ENCODE measurements at regions of chr6 and their contacts with region 1.

Region 1: DNA sequence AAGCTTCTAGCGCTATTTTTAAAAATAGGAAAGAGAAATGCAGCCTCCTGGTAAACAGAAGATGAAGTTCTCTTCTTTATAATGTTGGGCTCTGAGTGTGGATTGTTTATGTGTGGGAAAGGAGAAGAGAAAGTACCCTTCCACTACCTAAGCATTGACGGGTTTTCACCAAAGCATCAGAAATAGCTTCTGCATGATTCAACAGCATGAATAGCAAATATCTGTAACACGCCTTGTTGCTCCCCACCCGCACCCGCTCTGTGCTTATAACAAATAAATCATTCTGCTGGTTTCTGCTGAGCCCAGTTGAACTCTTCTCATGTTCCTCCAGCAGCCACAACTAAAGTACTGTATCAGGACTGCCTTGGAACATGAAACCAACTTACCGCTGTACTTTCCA is 20.7 kb downstream of the TXLNB start:
- DNase-seq: no peak
- H3K4me3 ChIP-seq: no peak overlapping the region
- H3K27ac ChIP-seq: no peak overlapping the region
- H3K4me1 ChIP-seq: no peaks in the 10 kb centered on the region
- H3K27me3 ChIP-seq: no peaks in the 10 kb centered on the region
- CTCF ChIP-seq: no peak
- POLR2A ChIP-seq: no peak

Region 2: DNA sequence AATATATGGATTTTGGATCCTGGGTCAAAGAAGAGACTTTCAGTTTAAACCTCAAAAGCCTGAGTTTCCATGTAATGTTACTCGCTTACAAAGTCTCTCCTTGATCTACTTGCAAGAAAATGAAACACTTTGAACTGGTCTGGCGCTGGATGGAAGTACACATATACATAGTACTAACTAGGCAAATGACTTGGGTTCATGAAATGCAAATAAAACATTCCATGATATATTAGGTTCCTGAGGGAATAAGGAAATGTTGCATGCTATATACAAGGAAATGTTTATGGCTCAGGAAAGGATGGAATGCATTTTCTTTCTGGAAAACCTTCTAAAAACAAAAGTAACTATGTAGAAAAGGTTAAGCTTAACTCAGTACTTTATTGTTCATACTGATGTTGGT is 32.1 kb after region 1 on chr6:
- CTCF ChIA-PET with region 1: no interaction called
- POLR2A ChIA-PET with region 1: no interaction called
- dilution Hi-C with region 1: no loop called
- intact Hi-C with region 1: loop called (anchors 2 kb)
- DNase-seq: peak; percentile 23
- H3K4me3 ChIP-seq: no peak overlapping the region
- H3K27ac ChIP-seq: no peak overlapping the region
- H3K4me1 ChIP-seq: no peaks in the 10 kb centered on the region
- H3K27me3 ChIP-seq: no peaks in the 10 kb centered on the region
- CTCF ChIP-seq: no peak
- POLR2A ChIP-seq: no peak